Transverse colon (tissue), 4 donors: ENCODE measurements at regions of chr10 and their contacts with region 1.

Region 1: GRCh38 chr10:119360181-119360921 is 153.0 kb downstream of the GRK5 start:
- DNase-seq: no peak
- H3K4me3 ChIP-seq: no peak overlapping the region
- H3K27ac ChIP-seq: peak overlapping the region in 1 of 4 donors; percentile 11
- H3K4me1 ChIP-seq: peaks cover 0 to 8% (median 0%) of the 10 kb centered on the region in 4 donors
- H3K27me3 ChIP-seq: no peaks in the 10 kb centered on the region
- CTCF ChIP-seq: no peak
- EP300 ChIP-seq: no peak
- POLR2A ChIP-seq: no peak

Region 2: GRCh38 chr10:119139464-119140067 is 220.8 kb before region 1 on chr10:
- in situ Hi-C with region 1: no loop called
- intact Hi-C with region 1: no loop called
- DNase-seq: no peak
- H3K4me3 ChIP-seq: no peak overlapping the region
- H3K27ac ChIP-seq: no peak overlapping the region
- H3K4me1 ChIP-seq: no peaks in the 10 kb centered on the region
- H3K27me3 ChIP-seq: no peaks in the 10 kb centered on the region
- CTCF ChIP-seq: peak; percentile 16 to 33 (median 23)
- EP300 ChIP-seq: no peak
- POLR2A ChIP-seq: no peak

Region 3: DNA sequence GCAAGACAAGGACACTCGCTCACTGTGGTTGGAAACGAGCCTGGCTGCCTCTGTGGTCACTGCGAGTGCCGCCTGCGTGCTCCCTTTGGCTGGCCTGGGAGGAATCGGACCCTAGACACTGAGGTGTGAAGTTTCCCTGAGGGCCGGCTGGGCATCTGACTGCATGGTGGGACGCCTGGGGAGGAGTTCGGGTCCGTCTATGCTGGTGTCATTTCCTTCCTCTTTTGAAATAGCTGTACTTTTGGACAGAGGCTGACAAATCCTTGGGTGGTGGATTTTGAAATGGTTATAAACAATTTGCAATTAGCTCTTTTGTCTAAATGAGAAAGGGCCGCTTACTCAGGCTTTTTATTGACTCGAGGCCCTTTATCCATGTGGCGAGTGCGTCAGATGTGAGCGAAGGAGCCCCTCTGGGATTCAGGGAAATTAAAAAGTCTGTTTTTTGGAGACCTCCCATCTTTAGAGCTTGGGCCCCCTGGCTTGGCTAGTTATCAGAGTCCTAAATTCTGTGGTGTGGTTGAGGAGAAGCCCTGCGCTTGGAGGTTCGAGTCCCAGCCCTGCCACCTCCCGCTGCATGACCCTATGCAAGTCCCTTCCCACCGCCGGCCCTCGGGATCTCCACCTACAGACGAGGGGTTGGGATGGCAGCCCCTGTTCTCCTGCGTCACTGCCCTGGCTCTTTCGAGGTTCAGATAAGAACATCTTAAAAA is 35.1 kb after region 1 on chr10:
- in situ Hi-C with region 1: no loop called
- intact Hi-C with region 1: loop called (anchors 5 kb)
- DNase-seq: no peak
- H3K4me3 ChIP-seq: no peak overlapping the region
- H3K27ac ChIP-seq: peak overlapping the region; percentile 37 to 63 (median 58)
- H3K4me1 ChIP-seq: peaks cover 0 to 28% (median 6%) of the 10 kb centered on the region in 4 donors
- H3K27me3 ChIP-seq: no peaks in the 10 kb centered on the region
- CTCF ChIP-seq: no peak
- EP300 ChIP-seq: no peak
- POLR2A ChIP-seq: no peak